PC-9 (cell line): ENCODE measurements at regions of chr15 and their contacts with region 1.

Region 1: DNA sequence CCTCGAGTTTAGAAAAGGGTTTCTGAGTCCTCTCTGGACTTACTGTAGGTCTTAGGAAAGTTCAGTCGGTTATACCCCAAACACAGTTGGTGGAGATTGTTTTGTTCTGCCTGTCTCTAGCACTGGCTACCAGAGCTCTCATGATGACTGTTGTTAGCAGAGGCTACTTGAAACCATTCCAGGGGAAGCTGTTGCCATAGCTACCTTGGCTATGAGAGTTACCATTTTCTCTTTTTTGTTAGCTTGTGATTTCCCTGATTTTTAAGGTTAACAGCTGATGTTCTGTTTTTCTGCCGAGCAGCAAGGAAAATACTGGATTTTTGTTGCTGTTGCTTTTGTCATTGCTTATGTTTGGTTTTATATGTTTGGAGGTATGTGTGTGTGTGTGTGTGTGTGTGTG is 26.7 kb downstream of the ABHD2 start:
- DNase-seq: no peak
- H3K4me3 ChIP-seq: peak overlapping the region; percentile 40; the same call in 1 of the 2 replicates
- H3K27ac ChIP-seq: peak overlapping the region; percentile 97
- H3K4me1 ChIP-seq: peaks cover 98% of the 10 kb centered on the region
- H3K27me3 ChIP-seq: no peaks in the 10 kb centered on the region
- CTCF ChIP-seq: no peak

Region 2: DNA sequence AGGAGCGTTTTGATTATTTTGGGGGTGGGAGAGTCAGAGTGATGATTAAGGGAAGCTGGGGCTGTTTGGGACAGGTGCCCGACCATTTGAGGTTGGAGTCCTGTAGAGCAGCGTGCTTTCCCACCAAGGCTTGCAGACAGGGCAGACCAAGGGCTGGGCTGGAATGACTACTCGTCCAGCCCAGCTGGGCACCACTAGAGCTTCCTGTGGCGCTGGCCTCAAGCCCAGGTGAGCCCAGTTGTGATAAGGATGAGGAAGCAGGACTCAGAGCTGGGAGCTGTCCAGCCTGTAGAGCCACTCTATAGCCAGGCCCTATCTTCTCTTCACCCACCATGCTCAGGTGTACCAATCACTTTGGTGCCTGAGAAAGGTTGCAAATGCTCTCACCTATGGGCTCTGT is 387.6 kb before region 1 on chr15:
- CTCF ChIA-PET with region 1: no interaction called
- POLR2A ChIA-PET with region 1: no interaction called
- intact Hi-C with region 1: no loop called
- DNase-seq: peak in 1 of 2 experiments; percentile 6
- H3K4me3 ChIP-seq: no peak overlapping the region
- H3K27ac ChIP-seq: no peak overlapping the region
- H3K4me1 ChIP-seq: no peaks in the 10 kb centered on the region
- H3K27me3 ChIP-seq: peaks cover 69% of the 10 kb centered on the region
- CTCF ChIP-seq: no peak

Region 3: GRCh38 chr15:89087830-89088604 is 27.0 kb before region 1 on chr15 and contains the start of gene ABHD2:
- CTCF ChIA-PET with region 1: interaction called, 4 read pairs
- POLR2A ChIA-PET with region 1: interaction called, 7 read pairs
- intact Hi-C with region 1: loop called (anchors 2 kb)
- DNase-seq: peak; percentile 98 to 99
- H3K4me3 ChIP-seq: peak within 1 kb of the TSS; percentile 79
- H3K27ac ChIP-seq: peak within 1 kb of the TSS; percentile 63
- H3K4me1 ChIP-seq: peaks cover 43% of the 10 kb centered on the region
- H3K27me3 ChIP-seq: no peaks in the 10 kb centered on the region
- CTCF ChIP-seq: no peak
- total RNA-seq, gene ABHD2: 86.8 and 148 TPM in 2 replicates

Region 4: GRCh38 chr15:89101302-89102191 is 13.4 kb before region 1 on chr15:
- CTCF ChIA-PET with region 1: no interaction called
- POLR2A ChIA-PET with region 1: interaction called, 4 read pairs
- intact Hi-C with region 1: loop called (anchors 1 kb)
- DNase-seq: peak; percentile 83 to 98
- H3K4me3 ChIP-seq: peak overlapping the region; percentile 9; the same call in 1 of the 2 replicates
- H3K27ac ChIP-seq: peak overlapping the region; percentile 95
- H3K4me1 ChIP-seq: peaks cover 86% of the 10 kb centered on the region
- H3K27me3 ChIP-seq: no peaks in the 10 kb centered on the region
- CTCF ChIP-seq: no peak

Region 5: DNA sequence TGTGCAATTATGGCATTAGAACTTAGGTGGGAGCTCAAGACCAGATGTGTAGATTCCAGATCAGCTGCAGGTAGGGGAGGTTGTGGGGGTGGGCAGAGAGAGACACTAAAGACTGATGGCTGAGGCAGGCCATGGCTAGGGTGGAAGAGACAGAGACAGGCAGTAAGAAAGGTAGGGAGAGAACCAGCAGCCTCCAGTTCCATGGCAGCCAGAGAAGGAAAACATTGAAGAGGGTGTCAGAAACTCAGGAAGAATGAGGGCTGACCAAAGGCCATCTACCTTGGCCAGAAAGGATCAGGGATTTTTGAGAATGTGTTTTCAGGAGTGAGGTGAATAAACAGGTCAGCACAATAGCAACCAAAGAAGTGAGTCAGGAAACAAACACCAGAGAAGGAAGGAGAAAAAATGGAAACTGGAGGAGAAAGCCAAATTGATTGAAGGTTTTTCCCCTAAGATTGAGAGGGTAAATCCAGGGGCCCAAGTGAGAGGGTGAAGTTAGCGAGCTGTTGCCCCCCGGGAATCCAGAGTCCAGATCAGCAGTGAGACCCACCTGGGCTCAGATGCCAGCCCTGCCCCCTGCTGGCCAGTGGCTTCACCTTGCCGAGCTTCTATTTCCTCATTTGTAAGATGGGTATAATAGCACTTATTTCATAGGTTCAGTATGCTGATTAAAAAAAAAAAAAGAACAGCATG is 14.3 kb after region 1 on chr15:
- CTCF ChIA-PET with region 1: interaction called, 3 read pairs
- POLR2A ChIA-PET with region 1: interaction called, 11 read pairs
- intact Hi-C with region 1: no loop called
- DNase-seq: peak in 1 of 2 experiments; percentile 54
- H3K4me3 ChIP-seq: no peak overlapping the region
- H3K27ac ChIP-seq: peak overlapping the region; percentile 40
- H3K4me1 ChIP-seq: peaks cover 51% of the 10 kb centered on the region
- H3K27me3 ChIP-seq: no peaks in the 10 kb centered on the region
- CTCF ChIP-seq: peak; percentile 81

Region 6: DNA sequence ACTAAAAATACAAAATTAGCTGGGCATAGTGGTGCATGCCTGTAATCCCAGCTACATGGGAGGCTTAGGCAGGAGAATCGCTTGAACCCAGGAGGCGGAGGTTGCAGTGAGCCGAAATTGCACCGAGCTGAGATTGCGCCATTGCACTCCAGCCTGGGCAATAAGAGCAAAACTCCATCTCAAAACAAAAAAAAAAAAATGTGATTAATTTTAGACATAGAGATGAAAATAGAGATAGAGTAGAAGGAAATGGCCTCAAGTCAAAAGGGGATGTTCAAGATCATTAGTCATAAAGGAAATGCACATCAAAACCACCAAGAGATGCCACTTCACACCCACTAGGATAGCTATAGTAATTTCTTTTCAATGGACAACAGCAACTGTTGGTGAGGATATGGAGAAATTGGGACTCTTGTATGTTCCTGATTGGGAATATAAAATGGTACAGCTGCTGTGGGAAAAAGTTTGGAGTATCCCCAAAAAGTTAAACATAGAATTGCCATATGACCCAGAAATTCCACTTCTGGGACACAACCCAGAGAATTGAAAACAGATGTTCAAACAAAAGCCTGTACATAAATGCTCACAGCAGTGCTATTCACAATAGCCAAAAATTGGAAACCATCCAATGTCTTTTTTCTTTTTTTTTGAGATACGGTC is 28.6 kb after region 1 on chr15:
- CTCF ChIA-PET with region 1: no interaction called
- POLR2A ChIA-PET with region 1: no interaction called
- intact Hi-C with region 1: loop called (anchors 2 kb)
- DNase-seq: peak; percentile 21 to 75
- H3K4me3 ChIP-seq: no peak overlapping the region
- H3K27ac ChIP-seq: peak overlapping the region; percentile 21
- H3K4me1 ChIP-seq: peaks cover 23% of the 10 kb centered on the region
- H3K27me3 ChIP-seq: no peaks in the 10 kb centered on the region
- CTCF ChIP-seq: no peak

Region 7: DNA sequence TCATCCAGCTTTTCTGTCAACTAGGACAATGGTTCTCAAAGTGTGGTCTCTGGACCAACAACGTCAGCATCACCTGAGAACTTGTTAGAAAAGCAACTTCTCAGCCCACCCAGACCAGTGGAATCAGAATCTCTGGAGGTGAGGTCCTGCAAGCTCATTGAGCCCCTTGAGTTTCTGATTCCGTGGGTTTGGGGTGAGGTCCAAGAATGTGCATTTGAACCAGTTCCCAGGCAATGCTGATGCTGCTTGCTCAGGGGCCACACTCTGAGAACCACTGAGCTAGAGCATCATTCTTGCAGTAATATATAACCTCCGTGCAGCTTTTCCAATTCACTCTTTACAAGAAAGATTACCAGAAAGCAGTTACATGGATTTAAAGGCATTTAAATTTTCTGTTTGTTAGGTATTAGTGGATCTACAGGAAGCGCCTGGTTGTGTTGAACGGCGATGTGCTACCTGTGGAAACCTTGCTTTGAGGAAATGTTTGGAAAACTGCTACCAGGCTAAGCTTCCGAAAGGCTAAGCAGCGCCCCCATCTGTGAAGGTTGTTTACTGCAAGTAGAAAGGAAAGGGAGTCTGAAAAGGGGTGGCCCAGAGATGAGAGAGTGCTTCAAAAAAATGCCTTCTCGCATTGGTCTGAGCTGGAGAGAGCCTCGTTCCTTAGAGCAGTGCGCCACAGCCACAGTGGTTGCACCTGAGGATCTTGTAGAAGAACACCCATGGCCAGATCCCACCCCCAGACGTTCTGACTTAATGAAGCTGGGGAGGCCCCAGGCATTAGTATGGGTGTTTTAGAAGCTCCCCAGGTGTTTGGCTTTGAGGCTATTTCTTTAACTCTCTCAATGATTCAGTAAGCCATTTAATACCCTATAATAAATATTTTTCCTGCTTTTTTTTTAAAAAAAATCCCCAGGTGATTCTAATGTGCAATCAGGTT is 56.4 kb after region 1 on chr15:
- CTCF ChIA-PET with region 1: interaction called, 7 read pairs
- POLR2A ChIA-PET with region 1: no interaction called
- intact Hi-C with region 1: loop called (anchors 5 kb)
- DNase-seq: peak; percentile 43 to 52
- H3K4me3 ChIP-seq: no peak overlapping the region
- H3K27ac ChIP-seq: no peak overlapping the region
- H3K4me1 ChIP-seq: peaks cover 23% of the 10 kb centered on the region
- H3K27me3 ChIP-seq: no peaks in the 10 kb centered on the region
- CTCF ChIP-seq: peak; percentile 84